Breast epithelium (tissue), 4 donors: ENCODE measurements at regions of chr4 and their contacts with region 1.

Region 1: DNA sequence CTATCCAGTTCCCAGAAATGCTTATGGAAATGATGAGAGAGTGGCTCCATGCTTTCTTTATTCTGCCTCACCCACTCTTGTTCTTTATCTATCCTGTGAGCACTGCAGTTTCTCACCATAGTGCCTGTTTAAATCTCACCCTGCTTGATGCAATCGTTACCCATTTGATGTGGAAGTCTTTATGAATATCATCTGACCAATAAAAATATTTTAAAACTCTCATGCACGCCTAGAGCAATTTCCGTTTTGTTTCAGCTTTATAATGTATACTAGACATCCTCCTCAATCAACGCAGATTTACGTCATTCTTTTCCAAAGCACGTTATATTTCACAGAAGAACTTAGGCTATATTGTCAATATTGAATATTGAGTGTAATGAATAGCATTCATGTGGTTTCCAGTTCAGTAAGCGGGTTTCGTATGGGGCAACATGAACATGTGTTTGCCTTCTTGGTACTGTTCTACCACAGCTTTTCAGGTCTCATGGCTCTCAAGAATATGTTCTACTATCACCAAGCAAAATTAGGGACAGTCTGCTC is 32.9 kb downstream of the GPM6A start:
- DNase-seq: no peak
- H3K4me3 ChIP-seq: no peak overlapping the region
- H3K27ac ChIP-seq: no peak overlapping the region
- H3K4me1 ChIP-seq: no peaks in the 10 kb centered on the region
- H3K27me3 ChIP-seq: no peaks in the 10 kb centered on the region
- CTCF ChIP-seq: no peak
- POLR2A ChIP-seq: no peak

Region 2: DNA sequence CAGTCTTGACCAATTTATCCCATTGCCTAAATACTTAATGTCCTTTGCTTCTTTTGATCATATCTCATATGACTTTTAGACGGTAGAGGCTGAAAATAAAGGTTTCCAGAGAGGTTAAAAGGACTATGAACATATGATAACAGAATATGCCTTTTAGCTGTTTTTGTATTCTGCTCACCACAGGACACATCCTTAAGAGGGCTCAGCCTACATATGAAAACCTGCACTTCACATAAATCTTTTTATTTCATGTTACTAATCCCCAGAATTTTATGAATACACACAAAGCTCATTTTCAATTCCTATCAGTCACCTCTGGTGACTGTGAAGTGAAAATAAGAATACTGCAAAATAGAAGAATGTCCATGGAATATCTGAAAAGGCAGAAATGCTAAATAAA is 59.1 kb before region 1 on chr4:
- intact Hi-C with region 1: loop called (anchors 2 kb)
- DNase-seq: no peak
- H3K4me3 ChIP-seq: no peak overlapping the region
- H3K27ac ChIP-seq: no peak overlapping the region
- H3K4me1 ChIP-seq: no peaks in the 10 kb centered on the region
- H3K27me3 ChIP-seq: no peaks in the 10 kb centered on the region
- CTCF ChIP-seq: no peak
- POLR2A ChIP-seq: no peak